ENCODE measurements at regions of chr3 and their contacts with region 1.

Region 1: DNA sequence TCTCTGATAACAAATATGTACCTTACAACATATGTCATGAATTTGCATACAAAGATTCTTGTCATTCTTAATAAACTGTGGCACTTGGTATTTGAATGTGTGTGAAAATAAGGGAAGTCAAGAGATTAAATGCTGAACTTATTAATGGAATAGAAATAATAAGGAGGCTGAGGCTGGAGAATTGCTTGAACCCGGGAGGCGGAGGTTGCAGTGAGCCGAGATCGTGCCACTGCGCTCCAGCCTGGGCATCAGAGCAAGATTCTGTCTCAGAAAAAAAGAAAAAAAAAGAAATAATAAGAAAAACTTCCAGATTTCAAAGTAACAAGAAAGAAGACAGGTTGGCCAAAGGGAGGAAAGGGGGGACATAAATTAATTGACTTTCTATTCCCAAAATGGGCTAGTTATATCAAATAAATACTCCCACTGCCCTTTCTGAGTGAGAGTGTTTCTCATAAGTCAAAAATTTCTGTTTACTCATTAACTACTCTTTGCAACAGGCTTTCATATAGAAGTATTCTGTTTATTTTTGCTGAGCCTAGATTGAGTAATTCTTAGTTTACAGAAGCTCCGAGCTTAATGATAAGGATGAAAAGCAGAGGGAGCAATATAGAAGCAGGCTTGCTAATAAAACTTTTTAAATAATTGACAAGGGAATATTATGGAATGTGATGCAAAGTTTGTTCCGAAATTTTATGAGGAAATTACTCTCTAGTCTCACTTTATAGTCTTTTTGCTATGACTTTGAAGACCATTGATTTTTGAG is 25.6 kb downstream of the KNG1 start:
- DNase-seq: peak; percentile 23
- ATAC-seq: peak; percentile 65
- H3K4me3 ChIP-seq: no peak overlapping the region
- H3K27ac ChIP-seq: no peak overlapping the region
- H3K4me1 ChIP-seq: peaks cover 3% of the 10 kb centered on the region; the same call in 1 of the 2 replicates
- H3K27me3 ChIP-seq: no peaks in the 10 kb centered on the region; the same call in 1 of the 2 replicates
- CTCF ChIP-seq: no peak
- POLR2A ChIP-seq: no peak
- RAD21 ChIP-seq: no peak

Region 2: GRCh38 chr3:185049710-185050109 is 1693.1 kb before region 1 on chr3:
- CTCF ChIA-PET with region 1: no interaction called
- POLR2A ChIA-PET with region 1: no interaction called
- dilution Hi-C with region 1: no loop called
- in situ Hi-C with region 1: no loop called
- intact Hi-C with region 1: loop called (anchors 5 kb)
- DNase-seq: no peak
- ATAC-seq: no peak
- H3K4me3 ChIP-seq: no peak overlapping the region
- H3K27ac ChIP-seq: no peak overlapping the region
- H3K4me1 ChIP-seq: no peaks in the 10 kb centered on the region
- H3K27me3 ChIP-seq: no peaks in the 10 kb centered on the region
- CTCF ChIP-seq: no peak
- POLR2A ChIP-seq: no peak
- RAD21 ChIP-seq: no peak